HCT116 (cell line): ENCODE measurements at regions of chrX and their contacts with region 1.

Region 1: DNA sequence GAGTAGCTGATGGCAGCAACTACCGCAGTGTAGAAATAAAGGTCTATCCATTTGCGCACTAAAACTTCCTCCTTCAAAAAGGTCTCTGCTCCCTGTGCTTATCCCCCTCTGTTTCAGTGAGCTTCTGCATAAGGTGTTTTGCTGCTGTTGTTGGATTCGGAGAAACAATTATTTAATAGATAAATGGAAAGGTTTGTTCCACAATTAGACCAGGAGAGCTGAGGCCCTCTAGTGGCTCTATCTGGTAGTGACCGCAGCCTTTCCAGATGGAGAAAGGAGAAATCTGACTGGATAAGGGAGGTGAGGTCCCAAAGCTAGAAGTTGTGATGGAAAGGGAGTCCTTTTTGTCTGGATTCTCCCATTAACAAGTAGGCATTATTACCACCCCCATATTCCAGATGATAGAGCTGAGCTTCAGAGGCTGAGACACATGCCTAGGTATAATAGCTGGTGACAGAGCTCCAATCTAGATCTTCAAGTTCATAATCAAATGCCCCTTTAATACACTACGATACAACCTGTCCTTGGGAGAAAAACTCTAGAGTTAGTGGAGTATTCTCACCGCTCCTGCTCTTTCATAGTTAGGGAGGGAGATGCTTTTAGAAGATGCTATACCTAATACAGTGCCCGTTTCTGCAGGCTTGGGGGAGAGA is 5.1 kb upstream of the GABRQ start:
- DNase-seq: peak; percentile 16
- ATAC-seq: 0 out of 2 replicates have a peak, but pooled peaks have one; percentile 47
- H3K4me3 ChIP-seq: no peak overlapping the region
- H3K27ac ChIP-seq: no peak overlapping the region
- H3K4me1 ChIP-seq: peaks cover 0 to 12% of the 10 kb centered on the region in 2 experiments; a peak in 2 of 4 replicates
- H3K27me3 ChIP-seq: peaks cover 17% of the 10 kb centered on the region; the same call in 1 of the 2 replicates
- CTCF ChIP-seq: peak; percentile 56 to 68 (median 65); a peak in 5 of 6 replicates
- POLR2A ChIP-seq: no peak
- RAD21 ChIP-seq: peak; percentile 71

Region 2: DNA sequence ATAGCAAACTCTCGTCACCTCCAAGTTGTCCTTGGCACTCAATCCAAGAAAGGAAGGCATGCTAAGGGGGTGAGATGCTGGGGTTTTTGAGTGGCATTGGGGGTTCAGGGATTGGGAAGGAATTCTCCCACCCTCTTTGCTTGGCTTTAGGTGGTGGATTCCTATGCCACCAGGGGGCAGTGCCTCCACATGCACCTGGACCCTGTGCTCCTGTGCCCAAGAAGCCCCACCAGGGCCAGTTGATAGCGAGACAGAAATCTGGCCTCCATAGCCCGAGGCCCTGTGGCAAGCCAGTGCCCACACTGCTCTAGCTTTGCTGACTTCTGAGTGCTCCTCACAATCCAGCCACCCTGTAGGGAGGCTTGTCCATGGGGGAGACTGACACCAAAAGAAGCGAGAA is 918.7 kb before region 1 on chrX:
- CTCF ChIA-PET with region 1: interaction called, 3 read pairs
- POLR2A ChIA-PET with region 1: no interaction called
- RAD21 ChIA-PET with region 1: no interaction called
- intact Hi-C with region 1: loop called (anchors 5 kb)
- DNase-seq: peak; percentile 2
- ATAC-seq: peak; percentile 86
- H3K4me3 ChIP-seq: no peak overlapping the region
- H3K27ac ChIP-seq: no peak overlapping the region
- H3K4me1 ChIP-seq: no peaks in the 10 kb centered on the region
- H3K27me3 ChIP-seq: peaks cover 4% of the 10 kb centered on the region; the same call in 1 of the 2 replicates
- CTCF ChIP-seq: peak; percentile 44 to 69 (median 59)
- POLR2A ChIP-seq: no peak
- RAD21 ChIP-seq: peak; percentile 62

Region 3: DNA sequence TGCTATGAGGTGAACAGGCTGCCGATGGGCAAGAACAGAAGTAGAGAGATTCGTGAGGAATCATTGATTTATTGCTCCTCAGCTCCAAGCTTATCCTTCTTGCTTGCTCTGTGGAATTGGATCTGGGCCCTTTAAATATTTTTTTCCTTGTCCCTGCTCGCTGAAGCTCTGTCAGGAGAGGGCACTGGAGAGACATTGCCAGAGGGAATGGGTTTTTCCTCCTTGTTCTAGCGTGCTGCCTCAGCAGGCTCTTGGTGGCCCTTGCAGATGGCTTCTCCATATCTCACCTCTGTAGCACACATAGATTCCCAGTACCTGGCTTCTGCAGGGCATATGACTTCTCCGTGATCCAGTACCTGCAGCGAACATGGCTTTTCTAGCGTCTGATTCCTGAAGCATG is 830.6 kb before region 1 on chrX:
- CTCF ChIA-PET with region 1: interaction called, 3 read pairs
- POLR2A ChIA-PET with region 1: no interaction called
- RAD21 ChIA-PET with region 1: no interaction called
- intact Hi-C with region 1: loop called (anchors 1 kb)
- DNase-seq: no peak
- ATAC-seq: peak; percentile 80
- H3K4me3 ChIP-seq: no peak overlapping the region
- H3K27ac ChIP-seq: no peak overlapping the region
- H3K4me1 ChIP-seq: no peaks in the 10 kb centered on the region
- H3K27me3 ChIP-seq: no peaks in the 10 kb centered on the region; the same call in 1 of the 2 replicates
- CTCF ChIP-seq: peak; percentile 34 to 42 (median 35); a peak in 4 of 6 replicates
- POLR2A ChIP-seq: no peak
- RAD21 ChIP-seq: peak; percentile 59

Region 4: DNA sequence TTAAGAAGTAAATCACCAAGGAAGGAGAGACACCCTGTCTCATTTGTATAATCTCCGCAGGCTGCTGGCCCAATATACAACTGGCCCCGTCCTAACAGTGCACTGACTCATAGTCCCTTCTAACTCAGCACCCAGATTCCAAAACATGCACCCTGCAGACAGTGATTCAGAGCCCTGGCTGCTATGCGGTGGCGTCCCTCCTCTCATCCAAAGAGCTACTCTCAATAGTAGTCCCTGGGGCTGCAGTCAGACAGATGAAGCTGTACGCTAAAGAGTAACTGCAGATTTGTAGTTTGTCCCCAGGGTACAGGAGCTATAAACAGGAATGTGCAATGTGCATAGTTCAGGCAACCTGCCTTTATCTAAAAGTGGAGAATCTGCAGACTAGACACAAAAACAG is 204.4 kb before region 1 on chrX:
- CTCF ChIA-PET with region 1: no interaction called
- POLR2A ChIA-PET with region 1: no interaction called
- RAD21 ChIA-PET with region 1: no interaction called
- intact Hi-C with region 1: no loop called
- DNase-seq: no peak
- ATAC-seq: no peak
- H3K4me3 ChIP-seq: no peak overlapping the region
- H3K27ac ChIP-seq: no peak overlapping the region
- H3K4me1 ChIP-seq: no peaks in the 10 kb centered on the region
- H3K27me3 ChIP-seq: no peaks in the 10 kb centered on the region
- CTCF ChIP-seq: no peak
- POLR2A ChIP-seq: no peak
- RAD21 ChIP-seq: no peak

Region 5: DNA sequence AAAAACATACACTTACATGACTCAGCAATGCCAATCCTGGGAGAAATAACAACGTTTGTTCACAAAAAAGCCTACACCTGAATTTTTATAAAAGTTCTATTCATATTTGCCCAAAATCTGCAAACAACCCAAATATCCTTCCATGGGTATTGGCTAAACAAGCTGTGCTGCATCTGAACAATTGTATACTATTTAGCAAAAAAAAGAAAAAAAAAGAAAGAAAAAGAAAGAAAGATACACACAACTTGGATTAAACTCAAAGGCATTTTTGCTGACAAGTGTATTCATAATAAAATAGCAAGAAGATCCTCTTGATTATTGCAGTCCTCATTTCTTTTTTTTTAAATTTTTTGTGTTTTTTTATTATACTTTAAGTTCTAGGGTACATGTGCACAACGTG is 41.6 kb after region 1 on chrX:
- CTCF ChIA-PET with region 1: no interaction called
- POLR2A ChIA-PET with region 1: no interaction called
- RAD21 ChIA-PET with region 1: no interaction called
- intact Hi-C with region 1: no loop called
- DNase-seq: no peak
- ATAC-seq: no peak
- H3K4me3 ChIP-seq: no peak overlapping the region
- H3K27ac ChIP-seq: no peak overlapping the region
- H3K4me1 ChIP-seq: no peaks in the 10 kb centered on the region
- H3K27me3 ChIP-seq: no peaks in the 10 kb centered on the region
- CTCF ChIP-seq: no peak
- POLR2A ChIP-seq: no peak
- RAD21 ChIP-seq: no peak